ENCODE measurements at regions of chr3 and their contacts with region 1.

Region 1: GRCh38 chr3:155854141-155854940 is at the start of gene SLC33A1:
- DNase-seq: peak; percentile 97 to 100
- H3K4me3 ChIP-seq: peak within 1 kb of the TSS; percentile 84 to 89
- H3K27ac ChIP-seq: peak within 1 kb of the TSS; percentile 89 to 93
- H3K4me1 ChIP-seq: peaks cover 10 to 36% of the 10 kb centered on the region in 2 donors
- H3K27me3 ChIP-seq: no peaks in the 10 kb centered on the region
- CTCF ChIP-seq: no peak
- total RNA-seq, gene SLC33A1: 15.6 TPM

Region 2: GRCh38 chr3:155504682-155505081 is 349.7 kb before region 1 on chr3:
- intact Hi-C with region 1: no loop called
- DNase-seq: no peak
- H3K4me3 ChIP-seq: no peak overlapping the region
- H3K27ac ChIP-seq: no peak overlapping the region
- H3K4me1 ChIP-seq: no peaks in the 10 kb centered on the region
- H3K27me3 ChIP-seq: no peaks in the 10 kb centered on the region
- CTCF ChIP-seq: no peak

Region 3: GRCh38 chr3:155772801-155773200 is 81.5 kb before region 1 on chr3:
- intact Hi-C with region 1: no loop called
- DNase-seq: no peak
- H3K4me3 ChIP-seq: no peak overlapping the region
- H3K27ac ChIP-seq: peak overlapping the region in 1 of 2 donors; percentile 16
- H3K4me1 ChIP-seq: peaks cover 2 to 3% of the 10 kb centered on the region in 2 donors
- H3K27me3 ChIP-seq: no peaks in the 10 kb centered on the region
- CTCF ChIP-seq: no peak

Region 4: GRCh38 chr3:155805802-155806618 is 48.3 kb before region 1 on chr3 and contains the start of gene C3orf33:
- intact Hi-C with region 1: loop called (anchors 2 kb)
- DNase-seq: peak in 1 of 2 donors; percentile 78
- H3K4me3 ChIP-seq: peak within 1 kb of the TSS; percentile 82 to 84
- H3K27ac ChIP-seq: peak within 1 kb of the TSS; percentile 79 to 87
- H3K4me1 ChIP-seq: no peaks in the 10 kb centered on the region
- H3K27me3 ChIP-seq: no peaks in the 10 kb centered on the region
- CTCF ChIP-seq: peak; percentile 79 to 89 (median 81)
- total RNA-seq, gene C3orf33: not detected

Region 5: DNA sequence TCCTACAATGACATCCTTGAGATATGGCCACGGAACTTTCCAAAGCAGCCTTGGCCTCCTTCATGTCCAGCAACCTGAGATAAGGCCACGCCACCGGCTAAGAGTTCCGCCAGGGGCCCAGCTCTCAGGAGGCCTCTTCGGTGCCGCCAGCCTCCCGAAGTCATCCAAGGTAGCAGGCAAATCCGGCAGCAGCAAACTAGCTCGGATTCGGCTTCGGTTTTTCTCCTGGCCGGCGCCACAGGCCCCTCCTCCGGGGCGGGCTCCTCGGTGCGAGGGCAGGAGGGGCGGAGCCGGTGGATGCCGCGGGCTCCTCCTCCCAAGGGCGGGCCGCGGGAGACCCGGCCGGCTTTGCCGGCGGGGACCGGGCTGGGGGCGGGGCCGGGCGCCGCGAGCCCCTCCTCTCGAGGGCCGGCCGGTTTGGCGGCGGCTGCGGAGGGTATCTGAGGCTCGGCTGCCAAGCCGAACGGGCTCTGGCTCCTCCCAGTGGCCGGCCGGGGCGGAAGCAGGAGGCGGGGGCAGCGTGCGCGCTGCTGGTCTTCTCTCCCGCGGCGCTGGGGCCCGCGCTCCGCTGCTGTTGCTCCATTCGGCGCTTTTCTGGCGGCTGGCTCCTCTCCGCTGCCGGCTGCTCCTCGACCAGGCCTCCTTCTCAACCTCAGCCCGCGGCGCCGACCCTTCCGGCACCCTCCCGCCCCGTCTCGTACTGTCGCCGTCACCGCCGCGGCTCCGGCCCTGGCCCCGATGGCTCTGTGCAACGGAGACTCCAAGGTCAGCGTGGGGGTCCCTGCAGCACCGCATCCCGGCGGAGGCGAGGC is 16.0 kb after region 1 on chr3 and contains the start of gene GMPS:
- intact Hi-C with region 1: loop called (anchors 1 kb)
- DNase-seq: peak; percentile 87 to 97
- H3K4me3 ChIP-seq: peak within 1 kb of the TSS; percentile 77 to 90
- H3K27ac ChIP-seq: peak within 1 kb of the TSS; percentile 96 to 98
- H3K4me1 ChIP-seq: peaks cover 0 to 25% of the 10 kb centered on the region in 2 donors
- H3K27me3 ChIP-seq: no peaks in the 10 kb centered on the region
- CTCF ChIP-seq: peak; percentile 35 to 62 (median 60)
- total RNA-seq, gene GMPS: 17.8 TPM

Measured in ascending aorta (tissue), 2 donors.